ENCODE measurements at regions of chr2 and their contacts with region 1.

Region 1: GRCh38 chr2:205680067-205680466 is 2.2 kb upstream of the NRP2 start:
- DNase-seq: peak; percentile 96
- ATAC-seq: peak; percentile 51
- H3K4me3 ChIP-seq: no peak overlapping the region
- H3K27ac ChIP-seq: no peak overlapping the region
- H3K4me1 ChIP-seq: peaks cover 35% of the 10 kb centered on the region
- H3K27me3 ChIP-seq: no peaks in the 10 kb centered on the region
- CTCF ChIP-seq: peak; percentile 92

Region 2: DNA sequence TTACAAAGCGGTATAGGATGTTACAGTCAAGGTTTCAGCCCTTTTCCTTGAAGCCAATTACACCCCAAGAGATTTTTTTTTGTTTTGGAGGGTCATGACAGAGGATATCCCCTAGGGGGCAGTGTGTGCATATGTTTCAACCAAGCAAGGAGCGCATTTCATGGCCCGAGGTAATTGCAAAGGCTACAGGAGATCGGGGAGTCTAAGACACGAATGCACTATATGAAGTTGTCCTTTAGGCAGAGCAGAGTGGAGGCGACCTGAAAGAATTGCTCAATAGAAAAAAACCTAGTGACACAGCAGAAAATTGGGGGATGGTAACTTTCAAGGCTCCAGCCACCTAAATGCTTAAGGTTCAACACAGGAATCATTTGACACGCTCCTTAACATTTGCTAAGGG is 1354.6 kb before region 1 on chr2:
- CTCF ChIA-PET with region 1: no interaction called
- POLR2A ChIA-PET with region 1: no interaction called
- intact Hi-C with region 1: loop called (anchors 5 kb)
- DNase-seq: peak; percentile 87
- ATAC-seq: peak; percentile 74
- H3K4me3 ChIP-seq: no peak overlapping the region
- H3K27ac ChIP-seq: no peak overlapping the region
- H3K4me1 ChIP-seq: peaks cover 22% of the 10 kb centered on the region
- H3K27me3 ChIP-seq: no peaks in the 10 kb centered on the region
- CTCF ChIP-seq: peak; percentile 92

Region 3: GRCh38 chr2:204881655-204882054 is 798.4 kb before region 1 on chr2:
- CTCF ChIA-PET with region 1: no interaction called
- POLR2A ChIA-PET with region 1: interaction called, 13 read pairs
- intact Hi-C with region 1: no loop called
- DNase-seq: no peak
- ATAC-seq: no peak
- H3K4me3 ChIP-seq: no peak overlapping the region
- H3K27ac ChIP-seq: no peak overlapping the region
- H3K4me1 ChIP-seq: no peaks in the 10 kb centered on the region
- H3K27me3 ChIP-seq: no peaks in the 10 kb centered on the region
- CTCF ChIP-seq: no peak

Region 4: GRCh38 chr2:205390866-205391265 is 289.2 kb before region 1 on chr2:
- CTCF ChIA-PET with region 1: no interaction called
- POLR2A ChIA-PET with region 1: no interaction called
- intact Hi-C with region 1: no loop called
- DNase-seq: no peak
- ATAC-seq: no peak
- H3K4me3 ChIP-seq: no peak overlapping the region
- H3K27ac ChIP-seq: no peak overlapping the region
- H3K4me1 ChIP-seq: no peaks in the 10 kb centered on the region; the same call in 1 of the 2 replicates
- H3K27me3 ChIP-seq: no peaks in the 10 kb centered on the region
- CTCF ChIP-seq: no peak

Region 5: DNA sequence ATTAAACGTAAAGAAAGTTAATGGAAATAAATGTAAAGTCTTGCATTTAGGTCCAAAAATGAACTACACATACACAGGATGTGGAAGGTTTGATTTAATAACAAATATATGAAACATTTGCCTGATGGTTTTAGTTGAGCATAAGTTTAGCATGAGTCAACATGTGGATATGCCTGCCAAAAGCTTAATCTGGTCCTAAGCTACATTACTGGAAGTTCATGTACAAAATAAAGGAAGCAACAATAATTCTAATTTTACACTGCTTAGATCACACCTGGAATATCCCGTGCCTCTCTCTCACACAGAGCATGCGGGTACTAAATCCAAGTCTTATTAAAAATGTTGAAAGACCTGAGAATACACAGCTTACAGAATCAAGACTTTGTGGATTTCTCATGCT is 274.3 kb before region 1 on chr2:
- CTCF ChIA-PET with region 1: interaction called, 4 read pairs
- POLR2A ChIA-PET with region 1: no interaction called
- intact Hi-C with region 1: loop called (anchors 10 kb)
- DNase-seq: peak; percentile 64
- ATAC-seq: peak; percentile 71
- H3K4me3 ChIP-seq: no peak overlapping the region
- H3K27ac ChIP-seq: peak overlapping the region; percentile 50
- H3K4me1 ChIP-seq: peaks cover 17% of the 10 kb centered on the region
- H3K27me3 ChIP-seq: no peaks in the 10 kb centered on the region
- CTCF ChIP-seq: no peak

Region 6: GRCh38 chr2:205539601-205540000 is 140.5 kb before region 1 on chr2:
- CTCF ChIA-PET with region 1: no interaction called
- POLR2A ChIA-PET with region 1: no interaction called
- intact Hi-C with region 1: loop called (anchors 10 kb)
- DNase-seq: peak; percentile 23
- ATAC-seq: no peak
- H3K4me3 ChIP-seq: no peak overlapping the region
- H3K27ac ChIP-seq: no peak overlapping the region
- H3K4me1 ChIP-seq: no peaks in the 10 kb centered on the region
- H3K27me3 ChIP-seq: no peaks in the 10 kb centered on the region
- CTCF ChIP-seq: peak; percentile 41; the same call in 1 of the 2 replicates

Region 7: DNA sequence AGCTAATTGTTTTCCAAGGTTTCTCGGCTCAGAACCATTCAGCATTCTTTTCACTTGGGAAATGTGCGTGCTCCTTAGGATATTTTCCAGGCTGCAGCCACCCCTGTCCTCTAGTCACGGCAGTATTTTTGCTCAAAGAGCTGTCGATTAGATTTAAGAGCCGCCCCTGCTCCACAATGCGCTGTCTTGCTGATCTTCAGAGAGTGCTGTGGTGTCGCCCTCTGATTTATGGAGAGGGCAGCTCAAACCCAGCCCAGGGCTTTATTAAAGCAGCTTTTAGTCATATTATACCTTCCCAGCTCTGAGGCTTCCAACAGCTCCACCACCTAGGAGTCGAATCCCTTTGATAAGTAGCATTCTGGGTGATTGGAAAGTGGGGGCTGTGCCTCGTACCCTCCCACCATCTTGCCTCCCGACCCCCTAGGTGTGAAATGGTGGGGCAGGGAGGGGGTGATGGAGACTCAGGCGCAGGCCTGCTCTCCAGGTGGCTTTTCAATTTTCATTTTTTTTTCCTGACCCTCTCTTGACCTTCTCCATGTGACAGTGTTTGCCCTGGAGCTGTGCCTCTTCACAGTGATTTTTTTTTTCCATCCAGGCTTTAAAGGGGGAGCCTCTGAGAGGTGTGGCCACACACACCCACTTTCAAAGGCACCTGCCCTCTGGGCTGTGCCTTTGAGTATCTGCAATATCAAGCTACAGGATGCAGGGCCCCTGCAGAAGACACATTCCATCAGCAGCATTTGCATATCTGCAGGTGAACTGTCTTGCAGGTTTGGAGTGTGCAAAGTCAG is 50.8 kb before region 1 on chr2:
- CTCF ChIA-PET with region 1: no interaction called
- POLR2A ChIA-PET with region 1: no interaction called
- intact Hi-C with region 1: no loop called
- DNase-seq: no peak
- ATAC-seq: no peak
- H3K4me3 ChIP-seq: no peak overlapping the region
- H3K27ac ChIP-seq: no peak overlapping the region
- H3K4me1 ChIP-seq: no peaks in the 10 kb centered on the region
- H3K27me3 ChIP-seq: no peaks in the 10 kb centered on the region
- CTCF ChIP-seq: no peak

Region 8: DNA sequence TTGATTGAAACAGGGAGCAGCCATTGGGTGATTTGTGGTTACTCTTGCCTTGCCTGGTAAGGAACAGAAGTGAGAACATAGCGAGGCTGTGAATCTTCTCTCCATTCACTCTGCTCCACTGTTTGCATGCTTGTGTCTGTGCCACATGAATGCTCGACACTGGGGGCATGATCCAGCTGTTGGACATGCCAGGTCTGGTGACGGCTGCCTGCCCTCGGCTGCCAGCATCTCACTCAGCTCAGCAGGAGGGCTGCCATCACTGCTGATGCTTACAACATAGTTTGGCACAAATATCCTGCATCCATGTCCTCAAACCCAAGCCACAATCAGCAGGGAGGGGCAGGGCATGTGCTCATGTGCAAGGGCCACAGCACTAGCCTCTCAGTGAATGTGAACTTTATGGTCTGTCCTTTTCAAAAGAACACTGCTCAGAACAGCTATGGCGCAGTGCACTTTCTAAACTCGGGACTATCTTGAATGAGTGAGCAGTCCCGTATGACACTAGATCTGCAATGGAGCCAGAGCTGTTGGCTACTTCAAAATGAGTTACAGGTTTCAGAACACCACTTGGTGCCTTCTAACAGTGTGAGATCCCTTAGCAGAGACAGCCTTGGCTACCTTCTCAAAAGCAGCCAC is 128.5 kb after region 1 on chr2:
- CTCF ChIA-PET with region 1: no interaction called
- POLR2A ChIA-PET with region 1: interaction called, 3 read pairs
- intact Hi-C with region 1: loop called (anchors 1 kb)
- DNase-seq: no peak
- ATAC-seq: no peak
- H3K4me3 ChIP-seq: no peak overlapping the region
- H3K27ac ChIP-seq: no peak overlapping the region
- H3K4me1 ChIP-seq: no peaks in the 10 kb centered on the region
- H3K27me3 ChIP-seq: no peaks in the 10 kb centered on the region
- CTCF ChIP-seq: no peak

Measured in PC-3 (cell line).